Naive thymus-derived CD4-positive, alpha-beta T cell (primary cell): ENCODE measurements at regions of chr14 and their contacts with region 1.

Region 1: GRCh38 chr14:93939304-93940229 is 12.4 kb downstream of the FAM181A start:
- DNase-seq: peak; percentile 71 to 97 (median 87)
- ATAC-seq: peak; percentile 95
- H3K4me3 ChIP-seq: peak overlapping the region; percentile 60
- H3K4me3 Mint-ChIP-seq: peak overlapping the region; percentile 18 to 83 (median 68)
- H3K27ac ChIP-seq: no peak overlapping the region
- H3K27ac Mint-ChIP-seq: peak overlapping the region in 1 of 9 donors; percentile 71
- H3K4me1 ChIP-seq: peaks cover 4 to 8% of the 10 kb centered on the region in 2 donors
- H3K4me1 Mint-ChIP-seq: peaks cover 0 to 34% (median 3%) of the 10 kb centered on the region in 7 donors
- H3K27me3 ChIP-seq: no peaks in the 10 kb centered on the region
- H3K27me3 Mint-ChIP-seq: peaks cover 0 to 16% (median 0%) of the 10 kb centered on the region in 5 donors

Region 2: GRCh38 chr14:92832137-92832700 is 1107.3 kb before region 1 on chr14:
- CTCF ChIA-PET with region 1: no interaction called
- POLR2A ChIA-PET with region 1: no interaction called
- intact Hi-C with region 1: no loop called
- DNase-seq: no peak
- ATAC-seq: no peak
- H3K4me3 ChIP-seq: no peak overlapping the region
- H3K4me3 Mint-ChIP-seq: no peak overlapping the region
- H3K27ac ChIP-seq: no peak overlapping the region
- H3K27ac Mint-ChIP-seq: peak overlapping the region in 3 of 9 donors; percentile 7 to 38 (median 10)
- H3K4me1 ChIP-seq: no peaks in the 10 kb centered on the region
- H3K4me1 Mint-ChIP-seq: peaks cover 0 to 1% (median 0%) of the 10 kb centered on the region in 7 donors
- H3K27me3 ChIP-seq: no peaks in the 10 kb centered on the region
- H3K27me3 Mint-ChIP-seq: no peaks in the 10 kb centered on the region

Region 3: DNA sequence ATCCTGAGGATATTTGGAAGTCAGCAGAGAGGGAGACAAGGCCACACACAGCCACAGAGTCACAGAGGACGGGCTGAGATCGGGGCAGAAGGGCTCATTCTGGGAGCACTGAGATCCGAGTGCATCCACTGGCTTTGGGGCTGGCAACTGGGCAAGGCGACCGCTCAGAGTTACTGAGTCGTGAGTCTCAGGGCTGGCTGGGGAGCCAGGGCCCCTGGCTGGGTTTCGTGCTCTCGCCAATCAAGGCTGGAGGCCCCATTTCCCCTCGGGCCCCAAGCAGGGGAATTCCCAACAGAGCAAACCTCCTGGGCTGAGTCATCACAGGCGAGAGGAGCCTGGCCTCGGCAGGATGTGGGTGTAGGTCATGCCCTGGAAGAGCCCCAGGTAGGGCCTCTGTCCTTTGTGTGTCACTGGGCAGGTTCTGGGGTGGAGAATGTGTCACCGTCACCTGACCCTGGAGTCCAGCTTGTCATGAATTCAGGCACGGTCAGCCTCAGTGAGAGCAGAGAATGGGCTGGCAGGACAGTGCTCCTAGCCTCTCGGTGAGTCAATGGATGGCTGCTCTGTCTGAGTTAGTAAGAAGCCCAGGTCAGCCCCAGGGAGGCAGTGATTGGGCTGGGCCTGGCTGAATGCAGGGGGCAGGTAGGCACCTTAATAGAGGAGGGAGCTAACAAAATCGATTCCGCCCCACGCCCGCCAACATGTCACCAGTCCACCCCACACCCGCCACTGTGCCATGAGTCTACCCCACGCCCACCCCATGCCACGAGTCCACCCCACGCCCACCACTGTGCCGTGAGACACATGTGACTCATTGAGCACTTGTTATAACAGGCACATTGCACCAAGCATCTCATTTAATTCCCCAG is 19.9 kb after region 1 on chr14:
- CTCF ChIA-PET with region 1: interaction called, 388 read pairs
- POLR2A ChIA-PET with region 1: interaction called, 10 read pairs
- intact Hi-C with region 1: loop called (anchors 1 kb)
- DNase-seq: peak; percentile 59 to 93 (median 76)
- ATAC-seq: peak; percentile 87
- H3K4me3 ChIP-seq: peak overlapping the region; percentile 23
- H3K4me3 Mint-ChIP-seq: peak overlapping the region; percentile 57 to 87 (median 72)
- H3K27ac ChIP-seq: no peak overlapping the region
- H3K27ac Mint-ChIP-seq: peak overlapping the region; percentile 49 to 100 (median 85)
- H3K4me1 ChIP-seq: peaks cover 74 to 99% of the 10 kb centered on the region in 2 donors
- H3K4me1 Mint-ChIP-seq: peaks cover 63 to 96% (median 87%) of the 10 kb centered on the region in 7 donors
- H3K27me3 ChIP-seq: no peaks in the 10 kb centered on the region
- H3K27me3 Mint-ChIP-seq: no peaks in the 10 kb centered on the region

Region 4: DNA sequence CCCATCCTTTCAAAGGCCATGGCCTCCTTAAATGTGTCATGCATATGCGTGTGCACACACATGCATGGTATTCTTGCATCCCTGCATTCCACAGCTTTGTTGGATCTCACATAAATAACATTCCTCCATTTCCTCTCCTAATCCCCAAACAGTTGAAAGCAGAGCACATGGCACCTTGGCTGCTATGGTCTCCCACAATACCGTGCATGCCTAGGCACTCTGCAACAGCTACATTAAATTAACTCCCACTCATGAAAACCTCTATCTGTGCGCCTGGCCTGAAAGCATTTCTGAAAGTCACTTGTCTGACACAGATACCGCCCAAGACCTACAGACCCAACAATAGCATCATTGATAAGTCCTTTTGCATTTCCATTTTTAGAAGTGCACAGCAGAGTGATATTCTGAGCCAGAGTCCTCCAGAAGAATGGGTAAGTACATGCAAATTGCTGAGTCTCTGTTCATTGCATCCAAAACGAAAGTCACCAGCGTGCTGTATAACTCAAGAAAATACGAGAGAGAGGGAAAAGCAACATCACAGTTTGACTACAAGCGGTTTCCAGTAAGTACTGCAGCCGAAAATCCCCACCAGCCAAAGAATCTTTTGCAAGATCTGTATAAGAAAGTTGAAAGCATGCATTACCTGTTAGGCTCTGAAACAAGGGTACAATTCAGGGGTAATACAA is 36.4 kb after region 1 on chr14:
- CTCF ChIA-PET with region 1: interaction called, 388 read pairs
- POLR2A ChIA-PET with region 1: interaction called, 27 read pairs
- intact Hi-C with region 1: loop called (anchors 1 to 2 kb)
- DNase-seq: no peak
- ATAC-seq: no peak
- H3K4me3 ChIP-seq: peak overlapping the region; percentile 9
- H3K4me3 Mint-ChIP-seq: peak overlapping the region in 9 of 10 donors; percentile 18 to 92 (median 59)
- H3K27ac ChIP-seq: no peak overlapping the region
- H3K27ac Mint-ChIP-seq: peak overlapping the region in 3 of 9 donors; percentile 12 to 97 (median 28)
- H3K4me1 ChIP-seq: peaks cover 41 to 46% of the 10 kb centered on the region in 2 donors
- H3K4me1 Mint-ChIP-seq: peaks cover 39 to 94% (median 62%) of the 10 kb centered on the region in 7 donors
- H3K27me3 ChIP-seq: no peaks in the 10 kb centered on the region
- H3K27me3 Mint-ChIP-seq: peaks cover 0 to 6% (median 6%) of the 10 kb centered on the region in 5 donors

Region 5: DNA sequence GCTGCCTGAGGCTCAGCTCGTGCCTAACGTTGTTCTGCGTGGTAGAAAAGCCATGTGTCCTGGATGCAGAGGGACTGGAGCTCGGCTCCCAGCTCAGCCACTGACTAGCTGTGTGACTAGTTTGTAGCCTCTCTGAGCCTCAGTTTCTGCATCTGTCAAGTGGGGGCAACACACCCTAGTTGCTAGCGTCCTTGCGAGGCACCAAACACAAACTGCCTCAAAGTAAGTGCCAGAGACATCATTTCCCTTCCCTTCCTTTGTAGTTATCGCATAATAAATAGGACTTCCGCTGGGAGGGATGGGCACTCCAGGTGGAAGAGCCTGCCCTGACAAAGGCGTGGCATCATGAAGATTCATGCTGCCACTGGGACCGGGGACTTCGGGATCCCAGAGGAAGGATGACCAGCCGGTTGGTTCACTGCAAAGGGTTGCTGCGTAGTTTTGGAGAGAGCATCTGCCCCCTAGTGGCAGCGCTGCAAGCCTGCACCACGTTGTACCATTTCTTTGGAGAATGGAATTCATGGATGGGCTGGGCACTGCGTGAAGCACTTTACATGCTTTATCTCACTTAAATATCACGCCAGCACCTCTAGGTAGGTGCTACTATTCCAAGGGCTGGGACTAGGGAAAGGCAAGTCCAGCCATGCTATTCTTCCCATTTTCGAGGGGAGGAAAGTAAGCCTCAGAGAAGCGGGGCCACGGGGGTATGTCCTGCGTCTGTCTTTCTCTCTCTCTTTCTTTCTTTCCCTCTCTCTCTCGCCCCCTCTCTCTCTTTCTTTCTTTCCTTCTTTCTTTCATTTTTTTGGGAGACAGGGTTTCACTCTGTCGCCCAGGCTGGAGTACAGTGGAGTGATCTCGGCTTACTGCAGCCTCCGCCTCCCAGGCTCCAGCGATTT is 62.2 kb after region 1 on chr14:
- CTCF ChIA-PET with region 1: interaction called, 139 read pairs
- POLR2A ChIA-PET with region 1: interaction called, 9 read pairs
- intact Hi-C with region 1: loop called (anchors 1 kb)
- DNase-seq: peak; percentile 28 to 63 (median 51)
- ATAC-seq: peak; percentile 85
- H3K4me3 ChIP-seq: no peak overlapping the region
- H3K4me3 Mint-ChIP-seq: peak overlapping the region in 9 of 10 donors; percentile 23 to 57 (median 53)
- H3K27ac ChIP-seq: no peak overlapping the region
- H3K27ac Mint-ChIP-seq: peak overlapping the region in 2 of 9 donors; percentile 38 to 78
- H3K4me1 ChIP-seq: peaks cover 4 to 6% of the 10 kb centered on the region in 2 donors
- H3K4me1 Mint-ChIP-seq: peaks cover 2 to 45% (median 10%) of the 10 kb centered on the region in 7 donors
- H3K27me3 ChIP-seq: no peaks in the 10 kb centered on the region
- H3K27me3 Mint-ChIP-seq: peaks cover 6 to 19% (median 8%) of the 10 kb centered on the region in 5 donors

Region 6: GRCh38 chr14:94136575-94137331 is 197.2 kb after region 1 on chr14:
- CTCF ChIA-PET with region 1: interaction called, 6 read pairs
- POLR2A ChIA-PET with region 1: no interaction called
- intact Hi-C with region 1: loop called (anchors 1 kb)
- DNase-seq: peak; percentile 59 to 84 (median 73)
- ATAC-seq: peak; percentile 96
- H3K4me3 ChIP-seq: no peak overlapping the region
- H3K4me3 Mint-ChIP-seq: no peak overlapping the region
- H3K27ac ChIP-seq: no peak overlapping the region
- H3K27ac Mint-ChIP-seq: no peak overlapping the region
- H3K4me1 ChIP-seq: no peaks in the 10 kb centered on the region
- H3K4me1 Mint-ChIP-seq: peaks cover 0 to 12% (median 0%) of the 10 kb centered on the region in 7 donors
- H3K27me3 ChIP-seq: no peaks in the 10 kb centered on the region
- H3K27me3 Mint-ChIP-seq: peaks cover 0 to 34% (median 4%) of the 10 kb centered on the region in 5 donors